Activated CD4-positive, alpha-beta T cell treated with anti-CD3 and anti-CD28 coated beads for 36 hours (primary cell): ENCODE measurements at regions of chr1 and their contacts with region 1.

Region 1: DNA sequence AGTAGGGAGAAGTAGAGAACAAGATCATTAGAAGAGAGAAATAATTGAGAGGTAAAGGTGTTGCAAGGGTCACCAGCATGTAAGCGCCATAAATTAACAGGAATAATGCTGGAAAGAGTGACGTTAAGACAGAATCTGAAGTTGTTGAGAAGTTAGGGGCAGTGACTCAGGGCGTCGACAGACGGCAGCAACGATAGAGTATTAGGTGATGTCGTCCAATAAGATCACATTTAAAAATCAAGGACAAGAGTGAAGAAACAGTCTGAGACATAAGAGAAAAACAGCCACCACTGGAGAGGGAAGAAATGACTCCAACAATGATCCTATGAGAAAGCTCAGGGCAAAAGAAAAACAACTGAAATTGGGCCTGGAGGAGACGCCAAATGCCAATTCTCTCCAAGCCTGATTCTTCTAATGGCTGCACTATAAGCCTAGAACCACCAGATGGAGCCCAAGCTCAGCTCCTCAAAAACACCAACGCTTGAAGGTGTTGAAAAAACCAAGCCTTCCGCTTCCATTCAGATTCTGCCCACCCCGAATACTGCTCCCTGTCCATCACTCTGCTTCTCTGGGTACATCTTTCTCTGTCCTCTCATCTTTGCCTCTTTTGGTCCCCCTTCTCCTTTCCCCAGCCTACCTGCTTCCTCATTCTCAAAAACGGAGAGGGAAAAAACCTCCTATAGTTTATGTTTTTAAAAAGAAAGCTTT is 70.0 kb downstream of the LUZP1 start:
- DNase-seq: peak; percentile 74
- ATAC-seq: peak; percentile 17
- H3K4me3 Mint-ChIP-seq: no peak overlapping the region
- H3K27ac Mint-ChIP-seq: no peak overlapping the region
- H3K4me1 Mint-ChIP-seq: peaks cover 45% of the 10 kb centered on the region
- H3K27me3 Mint-ChIP-seq: no peaks in the 10 kb centered on the region

Region 2: GRCh38 chr1:22976461-22977243 is 122.0 kb before region 1 on chr1:
- CTCF ChIA-PET with region 1: interaction called, 3 read pairs
- POLR2A ChIA-PET with region 1: no interaction called
- intact Hi-C with region 1: loop called in 1 of 2 experiments (anchors 1 kb)
- DNase-seq: peak; percentile 74
- ATAC-seq: peak; percentile 95
- H3K4me3 Mint-ChIP-seq: no peak overlapping the region
- H3K27ac Mint-ChIP-seq: no peak overlapping the region
- H3K4me1 Mint-ChIP-seq: no peaks in the 10 kb centered on the region
- H3K27me3 Mint-ChIP-seq: peaks cover 13% of the 10 kb centered on the region

Region 3: DNA sequence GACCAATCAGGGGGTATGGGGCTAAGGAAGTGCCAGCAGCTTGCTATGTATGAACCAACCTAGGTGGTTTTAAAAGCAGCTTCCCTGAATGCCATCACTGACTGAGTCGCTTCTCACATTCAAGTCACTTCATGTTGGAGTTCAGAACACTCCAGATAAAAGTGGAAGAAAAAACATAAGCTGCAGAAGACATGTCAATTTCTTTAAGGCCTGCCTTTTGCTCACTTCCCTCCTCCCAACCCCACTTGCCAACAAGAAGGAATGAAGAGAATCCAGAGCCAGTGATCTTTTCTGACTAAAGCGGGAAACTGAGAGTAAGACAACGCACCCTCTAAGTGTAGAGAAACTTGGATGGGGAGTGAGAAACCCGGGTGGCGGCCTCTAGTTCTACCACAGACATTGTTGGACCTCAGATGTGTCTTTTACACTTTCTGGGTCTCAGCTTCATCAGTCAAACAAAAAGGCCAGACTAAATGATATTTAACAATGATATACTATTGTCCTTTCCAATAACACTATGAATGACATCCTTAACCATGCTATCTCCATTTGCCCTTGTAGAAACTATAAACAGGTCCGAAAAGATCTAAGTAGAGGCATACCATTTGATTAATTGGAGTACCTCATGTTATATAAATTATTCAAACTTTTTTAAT is 15.9 kb after region 1 on chr1:
- CTCF ChIA-PET with region 1: interaction called, 46 read pairs
- POLR2A ChIA-PET with region 1: interaction called, 3 read pairs
- intact Hi-C with region 1: no loop called
- DNase-seq: peak; percentile 18
- ATAC-seq: no peak
- H3K4me3 Mint-ChIP-seq: no peak overlapping the region
- H3K27ac Mint-ChIP-seq: no peak overlapping the region
- H3K4me1 Mint-ChIP-seq: peaks cover 74% of the 10 kb centered on the region
- H3K27me3 Mint-ChIP-seq: no peaks in the 10 kb centered on the region

Region 4: DNA sequence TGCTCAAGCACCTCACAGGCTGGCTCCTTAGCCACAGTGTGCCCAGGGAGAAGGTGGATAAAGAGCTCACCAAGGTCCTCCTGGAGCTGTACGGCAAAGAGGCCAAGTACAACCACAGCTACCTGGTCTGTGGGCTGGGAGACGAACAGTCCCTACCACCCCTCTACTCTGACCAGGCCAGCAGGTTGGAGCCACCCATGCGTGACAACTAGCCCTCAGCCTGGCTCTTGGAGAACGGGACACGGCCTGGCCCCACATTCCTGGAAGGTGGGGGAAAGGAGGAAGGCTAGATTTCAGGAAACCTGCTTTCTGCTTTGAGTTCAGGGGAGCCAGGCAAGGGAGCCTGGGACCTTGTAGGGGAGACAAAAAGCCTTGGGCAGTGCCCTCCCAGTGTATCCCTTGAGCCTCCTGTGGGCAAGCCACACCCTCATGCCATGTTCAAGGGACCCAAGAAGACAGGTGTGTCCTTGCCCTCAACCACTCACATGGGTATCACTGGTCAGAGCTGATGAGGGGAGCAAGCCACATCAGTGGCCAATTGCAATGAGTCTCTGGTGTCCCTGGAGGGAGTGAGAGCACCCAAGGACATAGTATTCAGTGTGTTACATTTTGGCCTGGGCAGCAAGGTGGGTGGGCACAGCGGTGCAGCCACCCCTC is 42.5 kb after region 1 on chr1:
- CTCF ChIA-PET with region 1: interaction called, 11 read pairs
- POLR2A ChIA-PET with region 1: no interaction called
- intact Hi-C with region 1: loop called in 1 of 2 experiments (anchors 5 kb)
- DNase-seq: no peak
- ATAC-seq: no peak
- H3K4me3 Mint-ChIP-seq: no peak overlapping the region
- H3K27ac Mint-ChIP-seq: peak overlapping the region; percentile 38
- H3K4me1 Mint-ChIP-seq: peaks cover 4% of the 10 kb centered on the region
- H3K27me3 Mint-ChIP-seq: no peaks in the 10 kb centered on the region

Region 5: GRCh38 chr1:23168457-23169194 is 70.0 kb after region 1 on chr1 and contains the start of gene LUZP1:
- CTCF ChIA-PET with region 1: interaction called, 55 read pairs
- POLR2A ChIA-PET with region 1: interaction called, 4 read pairs
- intact Hi-C with region 1: loop called in 1 of 2 experiments (anchors 1 kb)
- DNase-seq: peak; percentile 94
- ATAC-seq: peak; percentile 85
- H3K4me3 Mint-ChIP-seq: peak within 1 kb of the TSS; percentile 97
- H3K27ac Mint-ChIP-seq: peak within 1 kb of the TSS; percentile 86
- H3K4me1 Mint-ChIP-seq: peaks cover 27% of the 10 kb centered on the region
- H3K27me3 Mint-ChIP-seq: no peaks in the 10 kb centered on the region
- total RNA-seq, gene LUZP1: 13.2 to 13.6 TPM

Region 6: GRCh38 chr1:23184212-23184934 is 85.8 kb after region 1 on chr1:
- CTCF ChIA-PET with region 1: interaction called, 547 read pairs
- POLR2A ChIA-PET with region 1: interaction called, 5 read pairs
- intact Hi-C with region 1: loop called (anchors 1 kb)
- DNase-seq: peak; percentile 46
- ATAC-seq: peak; percentile 44
- H3K4me3 Mint-ChIP-seq: peak overlapping the region; percentile 49
- H3K27ac Mint-ChIP-seq: no peak overlapping the region
- H3K4me1 Mint-ChIP-seq: peaks cover 4% of the 10 kb centered on the region
- H3K27me3 Mint-ChIP-seq: no peaks in the 10 kb centered on the region